Transverse colon (tissue), 4 donors: ENCODE measurements at regions of chr10 and their contacts with region 1.

Region 1: DNA sequence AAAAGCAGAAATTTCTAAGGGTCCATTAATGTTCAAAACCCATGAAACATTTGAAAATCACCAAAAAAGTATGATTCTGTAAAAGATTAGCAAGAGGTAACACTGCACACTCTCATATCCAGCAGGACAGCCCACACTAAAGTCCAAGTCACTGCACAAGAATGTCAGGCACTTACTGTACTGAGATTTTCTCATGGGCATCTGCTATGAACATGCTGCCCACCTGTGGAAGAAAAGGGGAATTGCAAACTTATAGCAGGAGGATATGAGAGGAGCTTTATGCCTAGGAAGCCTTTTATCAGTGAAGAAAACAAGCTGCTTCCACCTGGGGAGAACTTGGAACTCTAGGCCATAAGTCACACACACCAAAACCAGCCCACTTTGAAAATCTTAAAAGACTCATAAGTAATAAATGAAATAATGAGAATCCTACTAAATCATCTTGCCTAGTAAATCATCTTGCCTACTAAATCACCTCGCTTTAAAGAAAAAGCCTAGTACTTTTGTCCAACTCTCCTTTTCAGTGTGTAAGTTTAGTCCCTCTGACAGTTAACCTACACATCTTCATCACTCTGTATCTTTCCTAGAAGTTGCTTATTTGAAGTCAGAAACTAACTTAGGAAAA is 46.1 kb downstream of the ARMH3 start:
- DNase-seq: peak; percentile 30
- H3K4me3 ChIP-seq: no peak overlapping the region
- H3K27ac ChIP-seq: no peak overlapping the region
- H3K4me1 ChIP-seq: peaks cover 0 to 3% (median 0%) of the 10 kb centered on the region in 4 donors
- H3K27me3 ChIP-seq: no peaks in the 10 kb centered on the region
- CTCF ChIP-seq: peak; percentile 77 to 85 (median 83)
- EP300 ChIP-seq: no peak
- POLR2A ChIP-seq: no peak

Region 2: DNA sequence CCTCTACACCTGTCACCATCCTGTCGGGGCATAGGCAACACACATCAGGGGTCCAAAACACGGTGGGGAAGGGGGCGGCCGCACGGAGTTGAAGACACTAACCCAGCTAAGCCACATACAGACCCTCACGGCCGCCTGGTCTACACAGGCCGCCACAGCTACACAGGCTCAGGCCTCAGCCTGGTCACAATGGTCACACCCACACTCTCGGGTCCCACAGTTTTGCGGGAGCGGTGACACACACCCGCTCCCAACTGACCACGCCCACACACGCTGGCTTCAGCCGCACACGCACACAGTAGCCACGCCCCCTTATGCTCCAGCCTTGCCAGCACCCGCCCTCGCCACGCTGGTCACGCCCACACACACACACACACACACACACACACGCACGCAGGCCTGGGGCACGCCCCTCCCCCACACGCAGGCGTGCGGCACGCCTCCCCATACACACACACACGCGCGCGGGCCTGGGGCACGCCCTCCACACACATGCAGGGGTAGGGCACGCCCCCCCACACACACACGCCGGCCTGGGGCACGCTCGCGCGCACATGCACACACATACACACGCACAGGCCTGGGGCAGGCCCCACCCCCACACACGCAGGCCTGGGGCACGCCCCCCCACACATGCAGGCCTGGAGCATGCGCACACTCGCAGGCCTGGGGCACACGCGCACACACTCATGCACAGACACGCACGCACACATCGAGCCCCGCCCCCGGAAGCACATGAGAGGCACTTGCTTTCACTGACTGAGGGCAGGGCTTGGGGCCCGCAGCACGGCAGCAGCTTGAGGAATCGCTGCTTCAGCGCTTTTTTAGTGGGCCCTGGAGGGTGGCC is 179.4 kb before region 1 on chr10:
- in situ Hi-C with region 1: loop called in 1 of 4 experiments (anchors 10 kb)
- intact Hi-C with region 1: no loop called
- DNase-seq: peak; percentile 93
- H3K4me3 ChIP-seq: peak overlapping the region; percentile 27 to 47 (median 36)
- H3K27ac ChIP-seq: peak overlapping the region; percentile 59 to 85 (median 71)
- H3K4me1 ChIP-seq: peaks cover 4 to 17% (median 13%) of the 10 kb centered on the region in 4 donors
- H3K27me3 ChIP-seq: no peaks in the 10 kb centered on the region
- CTCF ChIP-seq: no peak
- EP300 ChIP-seq: no peak
- POLR2A ChIP-seq: peak; percentile 34

Region 3: DNA sequence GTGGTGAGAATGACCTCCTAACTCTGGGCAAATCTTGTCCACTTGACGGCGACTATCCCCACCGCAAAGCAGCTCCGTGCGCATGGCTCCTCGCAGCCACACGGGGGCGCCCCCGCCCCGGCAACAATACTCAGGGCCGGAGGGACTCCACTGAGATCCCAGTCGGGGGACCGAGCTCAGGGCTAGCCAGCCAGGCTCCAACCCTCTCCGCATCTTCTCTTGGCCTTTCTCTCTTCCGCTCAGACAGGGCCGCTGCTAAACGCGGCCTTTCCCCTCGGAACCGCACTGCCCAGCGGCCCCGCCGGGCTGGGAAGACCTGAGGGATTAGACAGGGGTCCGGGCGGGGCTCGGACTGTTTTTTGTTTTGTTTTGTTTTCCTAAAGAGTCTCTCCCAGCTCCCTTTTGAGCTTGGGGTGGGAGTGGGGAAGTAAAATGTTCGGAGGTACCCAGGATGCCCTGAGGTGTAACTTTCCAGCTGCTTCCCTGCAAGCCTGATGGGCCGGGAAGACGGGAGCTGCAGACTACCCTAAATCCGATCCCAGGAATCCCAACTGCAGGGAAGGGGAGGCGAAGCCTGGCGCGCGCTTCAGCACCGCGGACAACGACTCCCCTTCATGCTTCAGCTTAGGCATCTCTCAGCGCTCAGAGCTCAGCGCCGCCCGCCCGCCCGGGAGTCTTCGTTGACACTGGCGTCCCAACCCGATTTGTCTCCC is 169.0 kb before region 1 on chr10:
- in situ Hi-C with region 1: loop called (anchors 10 kb)
- intact Hi-C with region 1: loop called (anchors 10 kb)
- DNase-seq: peak; percentile 80
- H3K4me3 ChIP-seq: peak overlapping the region in 3 of 4 donors; percentile 13 to 48 (median 18)
- H3K27ac ChIP-seq: no peak overlapping the region
- H3K4me1 ChIP-seq: peaks cover 20 to 31% (median 25%) of the 10 kb centered on the region in 4 donors
- H3K27me3 ChIP-seq: no peaks in the 10 kb centered on the region
- CTCF ChIP-seq: peak; percentile 81 to 93 (median 86)
- EP300 ChIP-seq: no peak
- POLR2A ChIP-seq: no peak

Region 4: GRCh38 chr10:101889256-101890210 is 120.4 kb before region 1 on chr10:
- in situ Hi-C with region 1: no loop called
- intact Hi-C with region 1: loop called (anchors 10 kb)
- DNase-seq: peak; percentile 73
- H3K4me3 ChIP-seq: no peak overlapping the region
- H3K27ac ChIP-seq: no peak overlapping the region
- H3K4me1 ChIP-seq: no peaks in the 10 kb centered on the region
- H3K27me3 ChIP-seq: no peaks in the 10 kb centered on the region
- CTCF ChIP-seq: peak; percentile 62 to 81 (median 66)
- EP300 ChIP-seq: no peak
- POLR2A ChIP-seq: no peak

Region 5: GRCh38 chr10:102195296-102195870 is 185.5 kb after region 1 on chr10:
- in situ Hi-C with region 1: no loop called
- intact Hi-C with region 1: no loop called
- DNase-seq: no peak
- H3K4me3 ChIP-seq: no peak overlapping the region
- H3K27ac ChIP-seq: no peak overlapping the region
- H3K4me1 ChIP-seq: no peaks in the 10 kb centered on the region
- H3K27me3 ChIP-seq: no peaks in the 10 kb centered on the region
- CTCF ChIP-seq: no peak
- EP300 ChIP-seq: no peak
- POLR2A ChIP-seq: no peak

Region 6: DNA sequence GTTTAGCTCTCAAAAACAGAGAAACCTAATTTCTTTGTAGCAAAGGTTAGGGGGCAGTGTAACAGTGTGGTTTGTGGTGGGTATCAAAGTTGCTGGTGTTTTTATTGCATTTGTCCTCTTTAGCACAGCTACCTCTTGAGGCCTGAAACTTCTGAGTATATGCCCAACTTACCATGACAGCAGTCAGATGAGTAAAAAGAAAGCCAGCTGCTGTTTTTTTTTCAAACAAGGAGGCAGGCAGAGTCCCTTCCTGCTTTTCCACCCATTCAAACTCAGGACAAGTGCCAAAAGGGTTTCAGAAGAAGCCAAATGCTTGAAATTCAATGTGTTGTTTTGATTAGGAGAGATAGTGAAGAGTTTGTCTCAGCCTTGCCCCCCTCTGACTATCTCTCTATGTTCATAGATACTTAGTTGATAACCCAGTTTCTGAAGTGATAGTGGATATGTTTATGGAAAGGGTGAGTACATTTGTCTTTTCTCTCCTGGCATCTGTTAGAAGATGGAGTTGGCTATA is 258.5 kb after region 1 on chr10:
- in situ Hi-C with region 1: no loop called
- intact Hi-C with region 1: no loop called
- DNase-seq: no peak
- H3K4me3 ChIP-seq: no peak overlapping the region
- H3K27ac ChIP-seq: no peak overlapping the region
- H3K4me1 ChIP-seq: peaks cover 7 to 32% (median 17%) of the 10 kb centered on the region in 4 donors
- H3K27me3 ChIP-seq: no peaks in the 10 kb centered on the region
- CTCF ChIP-seq: no peak
- EP300 ChIP-seq: no peak
- POLR2A ChIP-seq: no peak